Activated CD4-positive, alpha-beta T cell treated with anti-CD3 and anti-CD28 coated beads for 36 hours (primary cell): ENCODE measurements at regions of chr5 and their contacts with region 1.

Region 1: GRCh38 chr5:68433923-68434879 is 218.6 kb downstream of the PIK3R1 start:
- DNase-seq: peak; percentile 98
- ATAC-seq: peak; percentile 96
- H3K4me3 Mint-ChIP-seq: peak overlapping the region; percentile 37
- H3K27ac Mint-ChIP-seq: peak overlapping the region; percentile 84
- H3K4me1 Mint-ChIP-seq: peaks cover 57% of the 10 kb centered on the region
- H3K27me3 Mint-ChIP-seq: peaks cover 12% of the 10 kb centered on the region

Region 2: GRCh38 chr5:66553916-66554575 is 1880.2 kb before region 1 on chr5:
- CTCF ChIA-PET with region 1: no interaction called
- POLR2A ChIA-PET with region 1: no interaction called
- intact Hi-C with region 1: loop called in 1 of 2 experiments (anchors 5 kb)
- DNase-seq: peak; percentile 71
- ATAC-seq: peak; percentile 90
- H3K4me3 Mint-ChIP-seq: no peak overlapping the region
- H3K27ac Mint-ChIP-seq: peak overlapping the region; percentile 51
- H3K4me1 Mint-ChIP-seq: peaks cover 30% of the 10 kb centered on the region
- H3K27me3 Mint-ChIP-seq: peaks cover 24% of the 10 kb centered on the region

Region 3: GRCh38 chr5:68279984-68280383 is 154.2 kb before region 1 on chr5:
- CTCF ChIA-PET with region 1: interaction called, 5 read pairs
- POLR2A ChIA-PET with region 1: interaction called, 4 read pairs
- intact Hi-C with region 1: loop called (anchors 1 kb)
- DNase-seq: peak; percentile 54
- ATAC-seq: peak; percentile 91
- H3K4me3 Mint-ChIP-seq: peak overlapping the region; percentile 69
- H3K27ac Mint-ChIP-seq: peak overlapping the region; percentile 96
- H3K4me1 Mint-ChIP-seq: peaks cover 92% of the 10 kb centered on the region
- H3K27me3 Mint-ChIP-seq: no peaks in the 10 kb centered on the region

Region 4: DNA sequence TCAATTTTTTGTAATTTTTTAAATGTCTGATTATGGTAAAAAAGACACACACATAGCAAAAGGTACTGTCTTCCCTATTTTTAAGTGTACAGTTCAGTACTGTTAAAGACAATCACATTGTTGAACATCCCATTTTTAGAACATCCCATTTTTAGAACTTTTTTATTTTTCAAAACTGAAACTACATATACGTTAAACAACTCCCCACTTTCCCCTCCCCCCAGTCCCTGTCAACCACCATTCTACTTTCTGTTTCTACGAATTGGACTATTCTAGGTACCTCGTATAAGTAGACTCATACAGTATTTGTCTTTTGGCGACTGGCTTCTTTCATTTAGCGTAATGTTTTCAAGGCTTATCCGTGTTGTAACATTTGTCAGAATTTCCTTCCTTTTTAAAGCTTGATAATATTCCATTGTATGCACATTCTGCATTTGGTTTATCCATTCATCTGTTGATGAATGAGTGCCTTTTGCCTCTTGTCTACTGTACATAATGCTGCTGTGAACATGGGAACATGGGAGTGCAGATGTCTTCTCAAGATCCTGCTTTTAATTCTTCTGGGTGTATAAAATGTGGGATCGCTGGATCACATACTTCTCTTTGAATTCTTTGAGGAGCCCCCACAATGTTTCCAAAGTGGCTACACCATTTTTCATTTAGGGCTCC is 64.6 kb before region 1 on chr5:
- CTCF ChIA-PET with region 1: no interaction called
- POLR2A ChIA-PET with region 1: no interaction called
- intact Hi-C with region 1: loop called (anchors 1 kb)
- DNase-seq: peak; percentile 72
- ATAC-seq: peak; percentile 88
- H3K4me3 Mint-ChIP-seq: peak overlapping the region; percentile 24
- H3K27ac Mint-ChIP-seq: peak overlapping the region; percentile 16
- H3K4me1 Mint-ChIP-seq: peaks cover 36% of the 10 kb centered on the region
- H3K27me3 Mint-ChIP-seq: no peaks in the 10 kb centered on the region

Region 5: DNA sequence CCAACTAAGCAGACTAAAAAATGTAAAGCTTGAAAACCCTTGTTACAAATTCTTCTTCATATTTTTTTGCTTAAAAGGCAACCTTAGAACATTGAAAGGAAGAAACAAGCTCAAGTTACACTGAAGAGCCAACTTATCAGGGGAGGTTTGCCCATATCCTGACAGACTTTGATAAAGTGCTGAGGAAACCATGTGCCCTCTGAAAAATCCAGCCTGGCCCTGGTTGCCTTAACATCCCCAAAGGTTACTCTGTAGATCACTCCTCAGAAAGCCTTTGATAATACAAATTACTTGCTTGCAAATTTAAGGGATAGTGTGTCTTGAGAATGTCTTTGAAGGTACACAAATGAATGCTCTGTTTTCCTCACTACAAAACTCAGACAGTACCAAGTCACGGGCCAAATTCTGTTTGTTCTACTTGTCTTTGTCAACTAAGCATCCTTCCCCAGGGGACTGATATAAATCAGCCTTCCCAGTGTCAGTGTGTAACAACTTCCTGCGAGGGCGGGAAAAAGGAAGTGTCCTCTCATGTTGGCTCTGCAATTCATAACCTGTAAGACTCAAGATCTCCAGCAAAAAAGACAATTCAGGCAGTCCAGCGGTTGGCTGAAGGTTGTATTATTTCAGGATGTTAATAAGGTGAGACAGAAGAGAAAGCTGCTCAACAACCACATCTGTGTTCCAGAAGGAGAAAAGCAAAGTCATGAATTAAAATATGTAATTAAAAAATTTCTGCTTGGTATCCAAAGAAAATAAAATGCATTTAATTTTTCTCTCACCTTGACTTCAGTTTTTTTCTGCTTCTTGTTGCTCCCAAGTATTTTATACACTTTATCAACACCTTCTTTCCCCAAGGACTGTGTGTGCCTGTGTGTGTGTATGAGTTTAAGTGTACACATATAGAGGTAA is 18.8 kb before region 1 on chr5:
- CTCF ChIA-PET with region 1: no interaction called
- POLR2A ChIA-PET with region 1: no interaction called
- intact Hi-C with region 1: no loop called
- DNase-seq: no peak
- ATAC-seq: no peak
- H3K4me3 Mint-ChIP-seq: no peak overlapping the region
- H3K27ac Mint-ChIP-seq: no peak overlapping the region
- H3K4me1 Mint-ChIP-seq: peaks cover 8% of the 10 kb centered on the region
- H3K27me3 Mint-ChIP-seq: peaks cover 4% of the 10 kb centered on the region

Region 6: GRCh38 chr5:68460147-68460798 is 26.1 kb after region 1 on chr5:
- CTCF ChIA-PET with region 1: no interaction called
- POLR2A ChIA-PET with region 1: no interaction called
- intact Hi-C with region 1: loop called (anchors 1 to 2 kb)
- DNase-seq: peak; percentile 53
- ATAC-seq: no peak
- H3K4me3 Mint-ChIP-seq: no peak overlapping the region
- H3K27ac Mint-ChIP-seq: no peak overlapping the region
- H3K4me1 Mint-ChIP-seq: peaks cover 18% of the 10 kb centered on the region
- H3K27me3 Mint-ChIP-seq: no peaks in the 10 kb centered on the region

Region 7: DNA sequence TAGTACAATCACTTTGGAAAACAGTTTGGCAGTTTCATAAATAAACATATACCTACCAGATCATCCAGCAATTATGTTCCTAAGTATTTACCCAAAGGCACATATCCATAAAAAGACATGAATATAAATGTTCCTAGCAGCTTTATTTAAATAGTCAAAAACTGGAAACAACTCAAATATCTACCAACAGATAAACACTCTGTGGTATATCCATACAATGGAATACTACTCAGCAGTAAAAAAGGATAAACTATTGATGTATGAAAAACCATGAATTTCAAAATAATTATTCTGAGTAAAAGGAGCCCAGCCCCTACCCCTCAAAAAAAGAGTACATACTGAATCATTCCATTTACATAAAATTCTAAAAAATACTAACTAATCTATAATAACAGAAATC is 426.9 kb after region 1 on chr5:
- CTCF ChIA-PET with region 1: no interaction called
- POLR2A ChIA-PET with region 1: no interaction called
- intact Hi-C with region 1: no loop called
- DNase-seq: no peak
- ATAC-seq: no peak
- H3K4me3 Mint-ChIP-seq: no peak overlapping the region
- H3K27ac Mint-ChIP-seq: no peak overlapping the region
- H3K4me1 Mint-ChIP-seq: no peaks in the 10 kb centered on the region
- H3K27me3 Mint-ChIP-seq: peaks cover 5% of the 10 kb centered on the region